ENCODE measurements at regions of chr22 and their contacts with region 1.

Region 1: GRCh38 chr22:38262051-38262795 is 10.6 kb downstream of the TMEM184B start:
- DNase-seq: no peak
- ATAC-seq: peak; percentile 75
- H3K4me3 ChIP-seq: no peak overlapping the region
- H3K27ac ChIP-seq: 0 out of 2 replicates have a peak overlapping the region, but pooled peaks have one; percentile 22
- H3K4me1 ChIP-seq: peaks cover 36% of the 10 kb centered on the region
- H3K27me3 ChIP-seq: no peaks in the 10 kb centered on the region
- CTCF ChIP-seq: peak; percentile 59 to 77 (median 66)
- EP300 ChIP-seq: no peak
- POLR2A ChIP-seq: no peak
- RAD21 ChIP-seq: peak; percentile 52

Region 2: DNA sequence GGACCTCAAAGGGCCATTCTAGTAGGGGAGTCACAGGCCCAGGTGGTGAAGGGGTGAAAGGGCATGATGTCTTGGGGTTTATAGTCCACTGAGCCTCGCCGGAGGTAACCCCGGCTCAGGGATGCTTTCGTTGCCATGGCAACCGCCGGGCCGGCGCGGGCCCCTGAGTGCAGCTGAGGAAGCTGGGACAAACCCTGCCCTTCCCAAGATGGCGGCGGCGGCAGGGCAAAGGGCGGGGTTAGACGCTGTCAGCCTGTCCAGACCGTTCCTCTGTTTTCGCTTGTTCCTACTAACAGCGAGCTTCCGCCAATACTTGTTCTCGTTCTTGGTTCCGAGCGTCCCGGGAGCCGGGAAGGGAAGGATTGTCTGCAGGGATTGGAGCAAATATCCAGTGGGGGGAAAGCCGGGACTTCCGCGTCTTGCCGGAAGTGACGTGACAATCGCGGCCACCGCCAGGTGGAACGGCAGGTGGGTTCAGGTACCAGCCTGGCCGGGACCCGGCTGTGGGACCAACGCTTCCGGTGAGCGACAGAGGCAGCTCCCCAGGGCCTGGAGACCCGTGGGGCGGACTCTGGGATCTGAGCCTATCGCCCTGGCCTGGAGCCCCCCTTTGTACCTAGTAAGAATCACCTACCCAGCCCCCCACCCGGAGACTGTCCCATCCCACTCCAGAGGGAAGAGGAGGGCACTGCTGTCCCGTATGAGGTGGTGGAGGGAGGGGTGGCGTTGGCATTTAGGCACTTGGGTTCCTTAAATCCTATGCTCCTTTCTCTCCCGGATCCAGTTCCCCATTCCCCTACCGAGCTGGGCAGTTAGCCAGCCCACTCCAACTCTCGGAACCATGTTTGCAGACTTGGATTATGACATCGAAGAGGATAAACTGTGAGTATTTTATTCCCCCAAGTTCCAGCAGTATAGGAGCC is 205.0 kb before region 1 on chr22 and contains the start of gene PICK1:
- CTCF ChIA-PET with region 1: interaction called, 29 read pairs
- POLR2A ChIA-PET with region 1: no interaction called
- RAD21 ChIA-PET with region 1: interaction called, 6 read pairs
- SMC1A ChIA-PET with region 1: interaction called, 9 read pairs
- in situ Hi-C with region 1: no loop called
- intact Hi-C with region 1: loop called (anchors 5 kb)
- DNase-seq: peak; percentile 32
- ATAC-seq: peak; percentile 87
- H3K4me3 ChIP-seq: peak within 1 kb of the TSS; percentile 76
- H3K27ac ChIP-seq: peak within 1 kb of the TSS; percentile 94
- H3K4me1 ChIP-seq: 0 out of 2 replicates have a peak, but pooled peaks cover 3% of the 10 kb centered on the region
- H3K27me3 ChIP-seq: no peaks in the 10 kb centered on the region
- CTCF ChIP-seq: no peak
- EP300 ChIP-seq: no peak
- POLR2A ChIP-seq: peak; percentile 84
- RAD21 ChIP-seq: no peak
- polyA plus RNA-seq, gene PICK1: 0.07 to 0.84 TPM

Region 3: GRCh38 chr22:38191055-38191454 is 71.2 kb before region 1 on chr22:
- CTCF ChIA-PET with region 1: no interaction called
- POLR2A ChIA-PET with region 1: no interaction called
- RAD21 ChIA-PET with region 1: no interaction called
- SMC1A ChIA-PET with region 1: no interaction called
- in situ Hi-C with region 1: no loop called
- intact Hi-C with region 1: no loop called
- DNase-seq: no peak
- ATAC-seq: no peak
- H3K4me3 ChIP-seq: no peak overlapping the region
- H3K27ac ChIP-seq: no peak overlapping the region
- H3K4me1 ChIP-seq: peaks cover 8% of the 10 kb centered on the region
- H3K27me3 ChIP-seq: no peaks in the 10 kb centered on the region
- CTCF ChIP-seq: no peak
- EP300 ChIP-seq: no peak
- POLR2A ChIP-seq: no peak
- RAD21 ChIP-seq: no peak

Region 4: GRCh38 chr22:38201710-38202436 is 60.4 kb before region 1 on chr22 and contains the start of gene MAFF:
- CTCF ChIA-PET with region 1: interaction called, 5 read pairs
- POLR2A ChIA-PET with region 1: interaction called, 5 read pairs
- RAD21 ChIA-PET with region 1: interaction called, 4 read pairs
- SMC1A ChIA-PET with region 1: interaction called, 6 read pairs
- in situ Hi-C with region 1: no loop called
- intact Hi-C with region 1: loop called (anchors 2 kb)
- DNase-seq: peak; percentile 69
- ATAC-seq: peak; percentile 64
- H3K4me3 ChIP-seq: peak within 1 kb of the TSS; percentile 78
- H3K27ac ChIP-seq: peak within 1 kb of the TSS; percentile 47; the same call in 1 of the 2 replicates
- H3K4me1 ChIP-seq: peaks cover 42% of the 10 kb centered on the region
- H3K27me3 ChIP-seq: no peaks in the 10 kb centered on the region
- CTCF ChIP-seq: no peak
- EP300 ChIP-seq: no peak
- POLR2A ChIP-seq: no peak
- RAD21 ChIP-seq: no peak
- polyA plus RNA-seq, gene MAFF: 0.22 TPM in 1 of 2 experiments, not detected in the other

Region 5: GRCh38 chr22:38305471-38306448 is 43.5 kb after region 1 on chr22:
- CTCF ChIA-PET with region 1: interaction called, 14 read pairs
- POLR2A ChIA-PET with region 1: interaction called, 7 read pairs
- RAD21 ChIA-PET with region 1: interaction called, 12 read pairs
- SMC1A ChIA-PET with region 1: interaction called, 11 read pairs
- in situ Hi-C with region 1: no loop called
- intact Hi-C with region 1: loop called (anchors 5 kb)
- DNase-seq: peak; percentile 89
- ATAC-seq: peak; percentile 89
- H3K4me3 ChIP-seq: peak overlapping the region; percentile 26; the same call in 1 of the 2 replicates
- H3K27ac ChIP-seq: peak overlapping the region; percentile 75
- H3K4me1 ChIP-seq: peaks cover 44% of the 10 kb centered on the region
- H3K27me3 ChIP-seq: no peaks in the 10 kb centered on the region
- CTCF ChIP-seq: peak; percentile 20 to 42 (median 26); a peak in 4 of 6 replicates
- EP300 ChIP-seq: peak; percentile 66 to 81
- POLR2A ChIP-seq: peak; percentile 22; the same call in 1 of the 2 replicates
- RAD21 ChIP-seq: peak; percentile 34; the same call in 1 of the 2 replicates

Region 6: GRCh38 chr22:38353142-38353629 is 91.0 kb after region 1 on chr22:
- CTCF ChIA-PET with region 1: interaction called, 5 read pairs
- POLR2A ChIA-PET with region 1: no interaction called
- RAD21 ChIA-PET with region 1: no interaction called
- SMC1A ChIA-PET with region 1: no interaction called
- in situ Hi-C with region 1: no loop called
- intact Hi-C with region 1: loop called (anchors 2 kb)
- DNase-seq: no peak
- ATAC-seq: peak; percentile 95
- H3K4me3 ChIP-seq: no peak overlapping the region
- H3K27ac ChIP-seq: no peak overlapping the region
- H3K4me1 ChIP-seq: no peaks in the 10 kb centered on the region
- H3K27me3 ChIP-seq: no peaks in the 10 kb centered on the region
- CTCF ChIP-seq: peak; percentile 91 to 94 (median 93)
- EP300 ChIP-seq: no peak
- POLR2A ChIP-seq: peak; percentile 40; the same call in 1 of the 2 replicates
- RAD21 ChIP-seq: peak; percentile 90

Measured in GM12878 (cell line).